Cardiac septum (tissue), 1 donor: ENCODE measurements at regions of chr1 and their contacts with region 1.

Region 1: GRCh38 chr1:59296358-59297256 is at the start of gene FGGY:
- DNase-seq: peak; percentile 99
- total RNA-seq, gene FGGY: 20.5 TPM

Region 2: GRCh38 chr1:58816072-58816746 is 480.4 kb before region 1 on chr1:
- intact Hi-C with region 1: loop called (anchors 10 kb)
- DNase-seq: peak; percentile 97

Region 3: GRCh38 chr1:58903514-58904298 is 392.9 kb before region 1 on chr1:
- intact Hi-C with region 1: loop called (anchors 5 kb)
- DNase-seq: peak; percentile 95

Region 4: DNA sequence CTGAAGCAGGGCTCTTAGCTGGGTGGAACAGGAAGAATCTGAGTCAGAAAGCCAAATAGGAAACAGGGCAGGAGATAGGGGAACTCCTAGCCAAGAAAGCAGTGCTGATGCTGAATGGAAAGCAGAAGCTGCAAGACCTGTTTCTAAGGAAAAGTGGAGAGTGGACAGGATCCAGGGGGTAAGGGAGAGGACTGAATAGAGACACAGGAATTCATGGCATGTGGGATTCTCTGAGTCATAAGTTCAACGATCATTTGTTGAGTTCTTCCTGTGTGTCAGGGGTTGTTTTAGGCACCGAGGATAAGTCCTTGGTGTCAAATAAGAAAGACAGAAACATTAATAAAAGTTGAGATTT is 153.5 kb before region 1 on chr1:
- intact Hi-C with region 1: loop called (anchors 2 kb)
- DNase-seq: no peak

Region 5: DNA sequence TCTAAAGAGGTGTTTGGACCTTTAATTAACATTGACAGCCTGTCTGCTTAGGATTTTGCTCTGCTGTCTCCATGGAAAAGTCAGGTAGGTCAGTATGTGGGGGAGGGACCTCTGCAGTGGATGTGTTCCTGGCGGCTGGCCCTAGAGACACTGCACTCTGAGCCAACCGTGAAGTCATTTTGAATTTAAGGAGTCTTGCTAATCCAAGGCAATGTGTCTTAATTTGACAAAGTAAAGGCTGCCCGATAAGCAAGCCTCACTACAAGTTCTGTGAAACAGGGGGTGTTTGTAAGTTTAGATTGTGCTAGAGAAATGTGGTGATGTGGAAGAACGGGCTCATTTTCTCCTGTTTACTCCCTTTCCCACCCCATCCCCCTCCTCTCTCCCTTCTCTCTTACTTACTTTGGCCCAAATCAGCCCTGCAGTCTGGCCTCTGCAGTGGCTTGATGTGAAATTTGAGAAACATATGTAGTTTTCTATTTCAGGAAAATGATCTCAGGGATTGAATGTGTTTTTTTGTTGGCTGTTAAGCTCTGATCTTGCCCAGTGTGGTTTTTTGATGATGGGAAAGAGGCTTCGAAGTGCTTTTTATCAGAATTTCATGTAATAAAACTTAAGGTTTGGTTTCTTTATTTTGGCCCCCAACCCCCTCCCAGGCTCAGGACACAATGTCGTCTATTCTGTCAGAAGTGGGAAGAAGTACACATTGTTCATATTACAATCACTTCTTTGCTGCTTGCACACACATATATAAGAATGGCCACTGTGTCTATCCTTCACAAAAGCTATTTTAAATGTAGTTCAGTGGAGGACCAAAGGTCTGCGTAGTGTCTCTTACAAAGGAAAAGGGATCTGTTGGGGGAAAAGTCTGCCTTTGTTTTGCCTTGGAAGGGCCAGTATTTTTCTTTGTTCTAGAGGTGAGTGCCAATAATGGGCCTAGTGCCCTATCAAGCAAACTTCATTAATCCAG is 96.9 kb after region 1 on chr1:
- intact Hi-C with region 1: loop called (anchors 2 kb)
- DNase-seq: no peak

Region 6: GRCh38 chr1:59692591-59692990 is 396.0 kb after region 1 on chr1:
- intact Hi-C with region 1: loop called (anchors 5 kb)
- DNase-seq: no peak

Region 7: GRCh38 chr1:59759156-59759925 is 462.7 kb after region 1 on chr1:
- intact Hi-C with region 1: loop called (anchors 10 kb)
- DNase-seq: peak; percentile 89